GM18951 (cell line): ENCODE measurements at regions of chr16 and their contacts with region 1.

Region 1: DNA sequence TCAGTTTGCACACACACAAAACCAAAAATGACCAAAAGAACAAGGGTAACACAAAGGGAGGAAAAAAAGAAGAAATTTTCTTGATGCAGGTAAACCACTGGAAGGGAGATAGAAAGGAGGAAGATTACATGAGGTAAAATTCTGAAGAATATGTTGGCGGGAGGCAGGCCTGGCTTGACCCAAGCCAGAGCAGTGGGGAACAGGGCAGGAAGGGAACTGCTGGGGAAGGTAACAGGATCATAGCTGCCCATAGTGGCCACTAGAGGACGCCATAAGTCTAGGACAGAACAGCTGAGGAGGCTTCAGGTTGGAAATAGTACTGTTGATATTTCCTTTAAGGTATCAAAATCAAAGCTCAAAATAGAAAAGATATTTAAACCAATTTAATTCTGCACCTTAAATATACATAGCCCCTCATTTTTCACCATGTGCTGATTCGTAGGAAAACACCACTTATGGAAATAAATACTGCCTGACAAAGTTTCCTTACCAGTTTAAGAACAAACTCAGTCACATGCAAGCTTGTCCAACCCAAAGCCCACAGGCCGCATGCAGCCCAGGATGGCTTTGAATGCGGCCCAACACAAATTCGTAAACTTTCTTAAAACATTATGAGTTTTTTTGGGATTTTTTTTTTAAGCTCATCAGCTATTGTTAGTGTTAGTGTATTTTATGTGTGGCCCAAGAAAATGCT is 15.5 kb downstream of the VPS35 start:
- POLR2A ChIP-seq: no peak

Region 2: DNA sequence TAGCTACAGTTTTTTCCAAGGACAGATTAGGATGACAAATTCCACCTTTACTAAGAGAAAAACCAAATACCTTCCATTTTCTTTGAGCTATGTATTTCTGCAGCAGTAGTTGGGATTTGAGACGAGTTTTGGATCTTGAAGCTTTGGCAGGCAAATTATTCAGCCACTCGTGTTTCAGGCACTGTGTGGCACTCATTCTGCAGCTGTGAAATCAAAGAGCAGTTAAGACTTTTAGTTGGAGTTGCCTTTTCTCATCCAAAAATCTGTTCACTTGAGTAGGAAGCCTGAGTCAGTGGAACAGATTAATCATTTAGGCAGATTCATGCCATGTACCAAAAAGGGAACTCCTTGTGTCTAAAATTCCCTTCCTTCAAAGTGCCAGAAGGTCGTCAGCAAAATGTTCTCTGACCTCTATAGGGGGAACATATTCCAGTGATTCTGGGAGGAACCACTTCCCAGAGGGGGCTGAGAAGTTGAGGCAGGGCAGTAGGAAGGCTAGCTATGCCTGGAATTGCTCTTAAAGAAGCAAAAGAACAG is 36.1 kb after region 1 on chr16:
- in situ Hi-C with region 1: no loop called
- POLR2A ChIP-seq: no peak

Region 3: GRCh38 chr16:46743238-46743719 is 69.8 kb after region 1 on chr16:
- in situ Hi-C with region 1: no loop called
- POLR2A ChIP-seq: no peak

Region 4: DNA sequence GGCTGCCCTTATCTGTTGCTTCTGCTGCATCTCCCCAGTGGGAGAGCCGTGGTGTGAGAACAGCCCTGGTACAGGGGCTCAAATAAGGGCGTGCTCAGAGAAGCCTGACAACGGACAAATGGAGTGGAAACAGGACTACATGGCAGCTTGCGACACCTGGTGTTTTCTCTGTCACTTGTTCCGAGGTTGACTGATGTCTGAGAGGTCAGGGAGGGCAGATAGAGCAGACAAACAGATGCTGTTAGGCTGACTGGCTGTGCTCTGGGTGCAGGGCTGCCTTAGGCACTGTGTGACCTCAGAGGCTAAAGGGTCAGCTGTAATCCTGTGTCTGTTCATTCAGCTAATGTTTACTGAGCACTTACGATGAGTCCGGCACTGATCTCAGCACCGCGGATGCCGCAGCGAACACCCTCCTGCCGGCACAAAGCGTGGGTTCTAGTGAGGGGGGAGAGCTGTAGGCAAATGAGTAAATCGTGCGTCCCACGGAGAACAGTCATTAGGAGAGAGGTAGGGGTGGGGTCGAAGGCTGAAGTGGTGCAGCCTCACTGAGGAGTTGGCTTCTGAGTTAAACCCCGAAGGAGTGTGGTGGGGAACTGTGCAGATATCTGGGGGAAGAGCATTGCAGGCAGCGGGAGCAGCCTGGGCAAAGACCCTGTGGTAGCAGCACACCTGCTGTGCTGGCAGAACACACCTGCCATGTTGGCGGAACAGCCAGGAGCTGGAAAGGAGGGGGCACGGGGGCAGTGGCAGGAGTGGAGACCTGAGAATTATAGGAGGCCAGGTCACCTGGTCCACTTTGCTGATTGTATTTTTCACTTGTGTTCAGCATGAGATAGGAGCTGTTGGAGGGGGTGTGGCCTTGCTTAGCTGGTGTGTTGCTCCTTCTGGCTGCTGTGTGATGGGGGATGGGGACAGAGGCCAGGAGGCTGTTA is 245.7 kb after region 1 on chr16:
- in situ Hi-C with region 1: loop called (anchors 10 kb)
- POLR2A ChIP-seq: no peak